ENCODE measurements at regions of chr13 and their contacts with region 1.

Region 1: DNA sequence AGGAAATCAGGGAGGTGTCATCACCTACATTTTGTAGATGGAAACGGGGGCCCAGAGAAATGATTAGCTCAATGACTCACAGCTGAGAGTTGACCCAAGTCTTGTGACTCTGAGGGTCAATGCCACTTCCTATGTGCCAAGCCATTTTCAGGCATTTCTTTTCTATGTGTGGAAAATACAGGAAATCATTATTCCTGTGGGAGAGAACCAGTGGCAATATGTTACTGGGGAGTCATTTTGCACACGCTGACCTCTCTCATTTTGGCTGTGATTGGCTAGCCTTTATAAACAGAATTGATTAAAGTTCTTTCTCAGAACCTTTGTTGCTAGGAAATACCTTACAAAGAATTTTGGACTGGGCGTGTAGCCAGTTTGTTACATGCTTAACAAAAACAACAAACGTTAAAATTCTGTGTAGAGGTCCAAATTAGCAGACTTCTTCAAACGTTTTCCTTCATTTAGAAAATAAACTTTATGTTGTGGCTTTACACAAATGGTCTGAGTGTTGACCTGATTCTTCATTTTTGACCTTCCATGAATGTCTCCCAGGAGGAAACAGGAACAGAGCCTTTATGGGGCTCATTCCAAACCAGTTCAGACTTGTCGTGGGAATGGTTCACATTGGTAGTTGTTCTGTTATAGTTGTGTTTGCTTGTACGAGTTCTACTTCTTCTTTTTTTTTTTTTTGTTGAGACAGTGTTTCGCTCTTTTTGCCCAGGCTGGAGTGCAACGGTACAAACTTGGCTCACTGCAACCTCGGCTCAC is 11.4 kb downstream of the PCCA start:
- DNase-seq: peak; percentile 96
- H3K4me3 ChIP-seq: peak overlapping the region in 1 of 3 experiments; percentile 10
- H3K27ac ChIP-seq: peak overlapping the region; percentile 4
- H3K4me1 ChIP-seq: peaks cover 16% of the 10 kb centered on the region
- H3K27me3 ChIP-seq: no peaks in the 10 kb centered on the region
- CTCF ChIP-seq: no peak
- POLR2A ChIP-seq: no peak

Region 2: GRCh38 chr13:100131863-100132574 is 31.7 kb after region 1 on chr13:
- CTCF ChIA-PET with region 1: no interaction called
- POLR2A ChIA-PET with region 1: no interaction called
- dilution Hi-C with region 1: no loop called
- intact Hi-C with region 1: loop called (anchors 1 kb)
- DNase-seq: peak; percentile 97
- H3K4me3 ChIP-seq: no peak overlapping the region
- H3K27ac ChIP-seq: peak overlapping the region; percentile 57
- H3K4me1 ChIP-seq: peaks cover 20% of the 10 kb centered on the region
- H3K27me3 ChIP-seq: no peaks in the 10 kb centered on the region
- CTCF ChIP-seq: no peak
- POLR2A ChIP-seq: no peak

Region 3: GRCh38 chr13:100454876-100455275 is 354.6 kb after region 1 on chr13:
- CTCF ChIA-PET with region 1: no interaction called
- POLR2A ChIA-PET with region 1: no interaction called
- dilution Hi-C with region 1: no loop called
- intact Hi-C with region 1: no loop called
- DNase-seq: peak; percentile 36
- H3K4me3 ChIP-seq: no peak overlapping the region
- H3K27ac ChIP-seq: no peak overlapping the region
- H3K4me1 ChIP-seq: peaks cover 3% of the 10 kb centered on the region
- H3K27me3 ChIP-seq: no peaks in the 10 kb centered on the region
- CTCF ChIP-seq: no peak
- POLR2A ChIP-seq: no peak

Measured in endothelial cell of umbilical vein (primary cell).